WTC11 (cell line): ENCODE measurements at regions of chr19 and their contacts with region 1.

Region 1: DNA sequence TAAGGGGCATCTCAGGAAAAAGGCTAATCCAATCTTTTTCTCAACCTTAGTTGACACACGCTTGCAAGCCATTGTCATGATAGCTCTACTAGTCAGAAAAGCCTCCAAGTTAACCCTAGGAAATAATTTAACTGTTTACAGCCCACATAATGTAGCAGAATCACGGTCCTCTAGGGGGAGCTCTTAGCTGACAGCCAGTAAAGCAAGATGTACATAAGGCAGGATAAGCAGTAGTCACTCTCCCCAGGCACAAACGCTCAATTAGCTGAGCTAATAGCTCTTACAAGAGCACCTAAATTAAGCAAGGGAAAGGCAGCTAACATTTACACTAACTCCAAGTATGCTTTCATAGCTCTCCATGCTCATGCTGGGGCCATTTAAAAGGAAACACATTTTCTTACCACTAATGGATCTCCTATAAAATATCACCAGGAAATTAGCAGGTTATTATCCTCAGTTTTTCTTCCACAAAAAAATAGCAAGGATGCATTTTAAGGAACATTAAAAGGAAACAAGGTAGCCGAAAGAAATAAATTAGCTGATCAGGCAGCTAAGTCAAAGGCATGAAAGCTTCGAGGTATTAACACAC is 33.7 kb upstream of the ZSCAN5A start:
- DNase-seq: peak; percentile 34
- ATAC-seq: 0 out of 2 replicates have a peak, but pooled peaks have one; percentile 30
- H3K4me3 Mint-ChIP-seq: no peak overlapping the region
- H3K27ac Mint-ChIP-seq: no peak overlapping the region
- H3K4me1 Mint-ChIP-seq: peaks cover 43% of the 10 kb centered on the region
- H3K27me3 Mint-ChIP-seq: no peaks in the 10 kb centered on the region
- CTCF ChIP-seq: peak; percentile 56

Region 2: GRCh38 chr19:56066152-56067023 is 282.0 kb before region 1 on chr19:
- CTCF ChIA-PET with region 1: interaction called, 13 read pairs
- POLR2A ChIA-PET with region 1: no interaction called
- DNase-seq: peak; percentile 86
- ATAC-seq: peak; percentile 90
- H3K4me3 Mint-ChIP-seq: peak overlapping the region; percentile 59
- H3K27ac Mint-ChIP-seq: no peak overlapping the region
- H3K4me1 Mint-ChIP-seq: peaks cover 3% of the 10 kb centered on the region; the same call in 1 of the 2 replicates
- H3K27me3 Mint-ChIP-seq: peaks cover 24% of the 10 kb centered on the region
- CTCF ChIP-seq: peak; percentile 90

Region 3: DNA sequence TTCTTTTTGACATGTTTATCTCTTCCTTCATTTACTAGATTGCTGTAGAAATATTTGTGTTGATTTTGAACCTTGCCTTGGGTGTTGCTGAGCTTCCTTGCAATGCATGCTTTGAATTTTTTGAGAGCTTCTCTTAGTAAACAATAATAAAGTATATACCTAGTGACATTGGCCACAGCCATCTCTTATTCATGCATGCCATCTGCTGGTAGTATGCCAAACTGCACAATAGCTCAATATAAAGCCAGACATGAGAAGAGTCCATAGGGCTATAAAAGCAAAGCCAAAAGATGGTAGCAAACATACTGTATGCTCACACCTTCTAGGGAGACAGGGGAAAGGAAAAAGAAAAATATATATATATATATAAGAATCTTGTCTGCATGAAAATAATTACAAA is 14.9 kb before region 1 on chr19:
- CTCF ChIA-PET with region 1: interaction called, 57 read pairs
- POLR2A ChIA-PET with region 1: no interaction called
- DNase-seq: peak; percentile 37
- ATAC-seq: peak; percentile 73
- H3K4me3 Mint-ChIP-seq: no peak overlapping the region
- H3K27ac Mint-ChIP-seq: no peak overlapping the region
- H3K4me1 Mint-ChIP-seq: no peaks in the 10 kb centered on the region
- H3K27me3 Mint-ChIP-seq: peaks cover 14% of the 10 kb centered on the region
- CTCF ChIP-seq: peak; percentile 41; the same call in 1 of the 2 replicates

Region 4: DNA sequence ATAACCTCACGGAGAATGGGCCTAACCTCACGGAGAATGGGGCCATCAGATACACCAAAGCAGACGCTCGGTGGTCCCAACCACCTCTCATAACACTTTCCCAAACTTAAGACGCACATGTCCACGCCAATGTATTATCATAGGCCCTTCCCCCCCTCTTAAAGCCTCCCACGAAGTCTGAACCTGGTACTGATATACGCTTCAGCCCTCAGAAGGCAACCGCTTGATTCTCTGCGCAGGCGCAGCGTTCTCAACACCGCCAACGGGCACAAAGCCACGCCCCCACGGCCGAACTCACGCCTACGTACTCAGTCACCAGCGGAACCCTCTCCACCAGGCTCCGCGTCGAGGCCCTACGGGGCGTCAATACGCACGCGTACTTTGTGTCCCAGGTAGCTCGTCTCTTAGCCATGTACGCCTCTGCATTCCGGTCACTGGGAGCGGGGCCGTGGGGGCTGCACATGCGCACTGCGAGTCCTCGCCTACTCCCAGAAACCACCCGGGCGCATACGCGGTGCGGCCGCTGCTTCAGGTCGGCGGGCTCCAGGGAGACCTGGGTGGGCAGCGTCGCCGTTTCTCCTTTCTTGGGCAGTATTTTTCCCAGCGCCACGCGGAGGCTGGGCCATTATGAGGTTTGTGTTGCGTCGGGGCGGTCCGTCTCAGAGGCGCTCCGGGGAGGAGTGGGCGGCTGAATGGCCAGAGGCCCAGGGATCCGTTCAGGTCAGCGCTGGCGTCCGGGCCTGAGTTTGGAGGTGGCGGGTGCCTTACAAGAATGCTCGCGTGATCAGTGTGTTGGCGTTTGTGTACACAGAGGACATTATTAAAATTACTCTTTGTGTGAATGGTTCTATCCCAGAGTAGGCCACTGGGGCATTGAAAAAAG is 19.7 kb after region 1 on chr19:
- CTCF ChIA-PET with region 1: interaction called, 11 read pairs
- POLR2A ChIA-PET with region 1: no interaction called
- DNase-seq: peak; percentile 95
- ATAC-seq: peak; percentile 100
- H3K4me3 Mint-ChIP-seq: peak overlapping the region; percentile 88
- H3K27ac Mint-ChIP-seq: peak overlapping the region; percentile 94
- H3K4me1 Mint-ChIP-seq: peaks cover 14% of the 10 kb centered on the region
- H3K27me3 Mint-ChIP-seq: no peaks in the 10 kb centered on the region; the same call in 1 of the 2 replicates
- CTCF ChIP-seq: no peak